ENCODE measurements at regions of chr5 and their contacts with region 1.

Region 1: DNA sequence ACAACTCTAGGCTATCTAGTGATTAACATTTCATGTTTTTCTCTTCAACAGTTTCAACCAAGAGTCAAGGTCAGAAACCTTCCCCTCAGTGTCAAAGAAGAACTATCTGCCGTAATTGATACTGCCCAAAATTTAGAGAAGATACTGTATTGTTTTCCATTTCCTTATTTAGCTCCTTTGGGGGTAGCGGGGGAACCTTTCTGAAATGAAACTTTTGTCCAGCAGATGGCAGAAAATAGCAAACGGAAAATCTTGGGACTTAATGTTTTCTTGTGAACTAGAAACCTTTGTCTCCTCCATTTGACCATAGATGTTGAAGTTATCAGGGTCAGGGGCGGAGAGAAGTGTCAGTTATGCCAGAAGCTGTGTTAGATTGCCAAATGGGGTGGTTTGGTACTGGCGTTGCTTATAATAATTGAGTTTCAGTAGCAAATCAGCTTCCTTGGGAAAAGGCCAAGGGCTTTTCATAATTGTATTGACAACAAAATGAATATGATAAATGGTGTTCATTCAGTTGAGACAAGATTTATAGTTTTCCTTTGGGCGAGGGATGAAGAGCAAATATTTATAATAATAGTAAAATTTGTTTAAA is 101.7 kb upstream of the TLX3 start:
- DNase-seq: peak in 1 of 2 donors; percentile 67
- H3K4me3 ChIP-seq: no peak overlapping the region
- H3K27ac ChIP-seq: no peak overlapping the region
- H3K4me1 ChIP-seq: peaks cover 0 to 5% (median 2%) of the 10 kb centered on the region in 4 donors
- H3K27me3 ChIP-seq: no peaks in the 10 kb centered on the region
- CTCF ChIP-seq: peak in 5 of 7 experiments; percentile 6 to 42 (median 34)
- EP300 ChIP-seq: no peak
- POLR2A ChIP-seq: no peak

Region 2: DNA sequence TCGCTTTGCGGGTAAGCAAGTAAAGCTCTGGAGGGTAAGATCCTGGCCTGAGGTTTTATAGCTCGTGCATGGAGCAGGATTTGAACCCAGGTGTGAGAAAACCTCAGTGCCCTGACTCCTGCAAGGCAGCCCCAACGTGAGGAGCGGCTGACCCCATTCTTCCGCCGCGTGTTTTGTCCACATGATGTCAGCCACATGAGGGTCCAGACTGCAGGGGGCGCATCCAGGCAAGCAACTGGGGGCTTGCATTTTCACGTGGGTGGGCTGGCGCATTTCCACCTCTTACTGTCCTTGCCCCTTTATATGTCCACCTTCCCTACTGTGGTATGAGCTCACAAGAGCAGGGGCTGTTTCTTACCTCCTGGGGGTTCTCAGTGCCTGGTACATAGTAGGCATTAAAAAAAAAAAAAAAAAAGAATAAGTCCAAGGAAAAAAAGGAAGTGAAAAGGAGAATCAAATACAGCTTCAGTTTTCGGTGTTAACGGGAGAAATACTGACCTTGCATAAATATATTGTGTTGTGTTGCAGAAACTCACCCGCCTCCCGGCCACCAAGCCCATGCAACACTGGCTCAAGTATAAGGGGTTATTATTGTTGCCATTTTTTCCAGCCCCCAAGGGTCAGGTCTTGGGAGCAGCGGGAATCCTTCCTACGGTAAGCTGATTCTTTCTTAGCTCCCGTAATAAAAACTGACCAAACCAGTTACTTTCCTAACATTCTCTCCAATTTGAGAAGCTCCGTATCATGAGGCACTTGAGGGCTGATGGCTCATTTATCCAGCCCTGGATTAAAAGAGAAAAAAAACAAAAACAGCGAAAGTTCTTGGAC is 116.7 kb after region 1 on chr5:
- intact Hi-C with region 1: loop called (anchors 10 kb)
- DNase-seq: no peak
- H3K4me3 ChIP-seq: no peak overlapping the region
- H3K27ac ChIP-seq: no peak overlapping the region
- H3K4me1 ChIP-seq: no peaks in the 10 kb centered on the region
- H3K27me3 ChIP-seq: peaks cover 0 to 94% (median 53%) of the 10 kb centered on the region in 3 donors
- CTCF ChIP-seq: no peak
- EP300 ChIP-seq: no peak
- POLR2A ChIP-seq: no peak